H1 (cell line): ENCODE measurements at regions of chr15 and their contacts with region 1.

Region 1: DNA sequence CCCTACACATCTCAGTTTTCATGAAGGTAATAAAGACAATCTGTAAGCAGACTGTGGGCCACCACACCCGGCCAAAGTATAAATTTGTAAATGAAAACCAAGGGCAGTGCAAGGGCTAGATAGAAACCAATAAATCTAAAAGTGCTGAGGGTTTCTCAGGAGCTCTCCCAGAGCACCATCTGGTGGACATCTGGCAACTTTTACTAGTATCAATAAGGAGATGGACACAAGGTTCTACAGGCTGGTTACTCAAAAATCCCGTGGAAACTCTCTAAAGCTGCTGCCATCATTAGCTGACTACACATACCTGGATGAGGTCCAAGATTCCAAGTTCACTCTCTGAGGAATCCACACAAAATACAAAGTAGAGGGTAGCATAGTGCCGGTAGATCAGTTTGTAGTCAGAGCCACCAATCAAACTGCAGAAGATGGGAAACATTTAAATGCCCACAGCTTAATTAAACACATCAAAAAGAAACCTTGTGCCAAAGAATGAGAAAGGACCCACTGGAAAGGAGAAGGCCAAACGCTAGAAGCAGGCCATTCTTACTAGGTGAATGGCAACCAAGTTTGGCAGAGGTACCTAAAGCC is 5.5 kb downstream of the AP3S2 start:
- DNase-seq: no peak
- H3K4me3 ChIP-seq: no peak overlapping the region
- H3K27ac ChIP-seq: no peak overlapping the region
- H3K4me1 ChIP-seq: no peaks in the 10 kb centered on the region; a peak in 1 of 7 replicates
- H3K27me3 ChIP-seq: no peaks in the 10 kb centered on the region
- CTCF ChIP-seq: peak in 2 of 3 experiments; percentile 41 to 49; a peak in 3 of 4 replicates
- EP300 ChIP-seq: no peak
- POLR2A ChIP-seq: no peak
- RAD21 ChIP-seq: peak; percentile 53 to 67

Region 2: DNA sequence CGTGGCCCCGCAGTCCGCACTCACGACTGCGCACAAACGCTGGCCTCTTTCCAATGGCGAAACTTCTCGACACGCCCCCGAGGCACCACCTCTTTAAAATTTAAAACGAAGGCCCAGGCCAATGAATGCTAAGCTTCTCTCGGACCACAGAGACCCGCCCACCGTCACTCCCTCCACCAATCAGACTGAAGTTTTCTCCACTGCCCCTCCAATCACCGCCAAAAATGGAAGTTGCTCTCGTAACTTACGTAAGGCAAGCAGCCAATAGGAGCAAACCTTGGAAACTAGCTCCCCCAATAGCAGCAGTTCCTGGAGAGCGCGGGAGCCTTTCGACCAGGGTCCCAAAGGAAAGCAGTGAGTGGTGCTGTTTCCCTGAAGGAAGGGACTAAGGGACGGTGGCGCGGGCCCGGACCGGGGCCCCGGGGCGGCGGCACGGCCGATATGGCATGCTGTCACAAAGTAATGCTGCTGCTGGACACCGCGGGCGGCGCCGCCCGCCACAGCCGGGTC is 313.1 kb before region 1 on chr15 and contains the start of gene TICRR:
- CTCF ChIA-PET with region 1: no interaction called
- POLR2A ChIA-PET with region 1: no interaction called
- DNase-seq: peak; percentile 93 to 97
- H3K4me3 ChIP-seq: peak within 1 kb of the TSS; percentile 84 to 98 (median 90)
- H3K27ac ChIP-seq: peak within 1 kb of the TSS; percentile 27
- H3K4me1 ChIP-seq: peaks cover 0 to 5% (median 4%) of the 10 kb centered on the region in 4 experiments; a peak in 3 of 7 replicates
- H3K27me3 ChIP-seq: no peaks in the 10 kb centered on the region
- CTCF ChIP-seq: no peak
- EP300 ChIP-seq: no peak
- POLR2A ChIP-seq: peak; percentile 91 to 94
- RAD21 ChIP-seq: no peak
- total RNA-seq, gene TICRR: 34.8 and 37.3 TPM in 2 replicates

Region 3: GRCh38 chr15:89740137-89740536 is 148.2 kb before region 1 on chr15:
- CTCF ChIA-PET with region 1: interaction called, 13 read pairs
- POLR2A ChIA-PET with region 1: interaction called, 4 read pairs
- DNase-seq: peak; percentile 62 to 73
- H3K4me3 ChIP-seq: no peak overlapping the region
- H3K27ac ChIP-seq: no peak overlapping the region
- H3K4me1 ChIP-seq: no peaks in the 10 kb centered on the region
- H3K27me3 ChIP-seq: peaks cover 0 to 2% (median under 1%) of the 10 kb centered on the region in 4 experiments; a peak in 5 of 7 replicates
- CTCF ChIP-seq: peak; percentile 29 to 92 (median 83)
- EP300 ChIP-seq: no peak
- POLR2A ChIP-seq: no peak
- RAD21 ChIP-seq: peak; percentile 92 to 95

Region 4: DNA sequence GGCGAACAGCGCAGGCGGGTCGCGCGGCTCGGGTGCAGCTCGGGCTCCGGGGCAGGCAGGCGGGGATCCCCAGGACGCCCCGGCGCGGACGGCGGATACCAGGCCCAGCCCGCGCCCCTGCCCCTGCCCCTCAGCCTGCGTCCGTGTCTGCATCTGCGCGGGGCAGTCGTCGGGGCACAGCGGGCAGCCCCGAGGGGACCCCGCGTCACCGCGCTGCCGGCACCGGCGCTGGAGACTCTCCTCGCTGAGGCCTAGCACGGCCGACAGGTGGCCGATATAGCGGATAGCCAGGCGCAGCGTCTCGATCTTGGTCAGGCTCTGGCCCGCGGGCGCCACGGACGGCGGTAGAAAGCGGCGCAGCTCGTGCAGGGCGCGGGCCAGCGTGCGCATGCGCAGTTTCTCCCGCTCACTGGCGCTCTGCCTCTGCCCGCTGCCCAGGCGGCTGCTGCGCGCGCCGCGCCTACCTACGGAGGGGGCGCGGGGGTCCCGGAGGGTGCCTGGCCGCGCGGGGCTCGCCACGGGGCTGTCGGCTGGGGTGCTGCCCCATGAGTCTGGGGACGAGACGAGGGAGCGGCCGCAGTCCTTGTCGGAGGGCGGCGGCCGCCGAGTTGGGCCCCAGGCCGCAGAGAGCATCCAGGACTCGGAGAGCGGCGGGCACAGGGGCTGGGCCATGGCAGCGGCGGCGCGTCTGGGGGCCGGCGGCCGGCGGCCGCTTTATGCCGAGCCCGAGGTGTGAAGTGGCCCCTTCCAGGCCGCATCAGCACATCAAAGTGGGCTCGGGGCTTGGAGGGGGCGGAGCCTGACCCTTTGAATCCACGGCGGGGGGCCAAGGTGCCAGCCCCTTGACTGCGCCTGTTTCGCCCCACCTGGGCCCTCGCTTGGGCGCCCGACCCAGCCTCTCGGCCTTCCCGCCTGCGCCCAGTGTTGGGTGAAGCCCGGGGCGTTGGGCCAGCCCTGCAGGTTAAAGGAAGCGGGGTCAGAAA is 137.5 kb before region 1 on chr15 and contains the start of gene MESP1:
- CTCF ChIA-PET with region 1: interaction called, 11 read pairs
- POLR2A ChIA-PET with region 1: no interaction called
- DNase-seq: peak; percentile 71 to 93
- H3K4me3 ChIP-seq: peak within 1 kb of the TSS; percentile 32 to 66 (median 50)
- H3K27ac ChIP-seq: no peak within 1 kb of the TSS
- H3K4me1 ChIP-seq: peaks cover 0 to 24% (median 19%) of the 10 kb centered on the region in 4 experiments; a peak in 6 of 7 replicates
- H3K27me3 ChIP-seq: peaks cover 40 to 65% (median 63%) of the 10 kb centered on the region in 4 experiments
- CTCF ChIP-seq: peak; percentile 71 to 98 (median 86)
- EP300 ChIP-seq: no peak
- POLR2A ChIP-seq: no peak
- RAD21 ChIP-seq: peak; percentile 52 to 62; a peak in 3 of 4 replicates
- total RNA-seq, gene MESP1: 0.15 TPM in 1 of 2 replicates, not detected in the other

Region 5: DNA sequence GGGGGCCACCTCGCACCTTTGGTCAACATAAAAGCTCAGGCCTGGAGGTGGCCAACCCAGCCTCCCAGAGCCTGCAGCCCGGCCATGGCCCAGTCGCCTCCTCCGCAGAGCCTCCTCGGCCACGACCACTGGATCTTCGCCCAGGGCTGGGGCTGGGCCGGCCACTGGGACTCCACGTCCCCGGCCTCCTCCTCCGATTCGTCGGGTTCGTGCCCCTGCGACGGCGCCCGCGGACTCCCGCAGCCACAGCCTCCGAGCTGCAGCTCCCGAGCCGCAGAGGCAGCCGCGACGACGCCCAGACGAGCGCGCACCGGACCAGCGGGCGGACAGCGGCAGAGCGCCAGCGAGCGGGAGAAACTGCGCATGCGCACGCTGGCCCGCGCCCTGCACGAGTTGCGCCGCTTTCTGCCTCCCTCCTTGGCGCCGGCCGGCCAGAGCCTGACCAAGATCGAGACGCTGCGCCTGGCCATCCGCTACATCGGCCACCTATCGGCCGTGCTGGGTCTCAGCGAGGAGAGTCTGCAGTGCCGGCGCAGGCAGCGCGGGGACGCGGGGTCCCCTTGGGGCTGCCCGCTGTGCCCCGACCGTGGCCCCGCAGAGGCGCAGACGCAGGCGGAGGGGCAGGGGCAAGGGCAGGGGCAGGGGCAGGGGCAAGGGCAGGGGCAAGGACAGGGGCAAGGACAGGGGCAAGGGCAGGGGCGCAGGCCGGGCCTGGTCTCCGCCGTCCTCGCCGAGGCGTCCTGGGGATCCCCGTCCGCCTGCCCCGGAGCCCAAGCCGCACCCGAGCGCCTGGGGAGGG is 111.8 kb before region 1 on chr15 and contains the start of gene MESP2:
- CTCF ChIA-PET with region 1: interaction called, 20 read pairs
- POLR2A ChIA-PET with region 1: no interaction called
- DNase-seq: peak; percentile 75 to 90
- H3K4me3 ChIP-seq: peak within 1 kb of the TSS; percentile 3 to 56 (median 30); a peak in 7 of 8 replicates
- H3K27ac ChIP-seq: no peak within 1 kb of the TSS
- H3K4me1 ChIP-seq: peaks cover 0 to 4% (median 1%) of the 10 kb centered on the region in 4 experiments; a peak in 2 of 7 replicates
- H3K27me3 ChIP-seq: peaks cover 13 to 31% (median 27%) of the 10 kb centered on the region in 4 experiments
- CTCF ChIP-seq: peak; percentile 67 to 78 (median 71)
- EP300 ChIP-seq: no peak
- POLR2A ChIP-seq: no peak
- RAD21 ChIP-seq: peak; percentile 41 to 55; a peak in 3 of 4 replicates
- total RNA-seq, gene MESP2: 0.35 and 0.38 TPM in 2 replicates